Caco-2 (cell line): ENCODE measurements at regions of chr20 and their contacts with region 1.

Region 1: DNA sequence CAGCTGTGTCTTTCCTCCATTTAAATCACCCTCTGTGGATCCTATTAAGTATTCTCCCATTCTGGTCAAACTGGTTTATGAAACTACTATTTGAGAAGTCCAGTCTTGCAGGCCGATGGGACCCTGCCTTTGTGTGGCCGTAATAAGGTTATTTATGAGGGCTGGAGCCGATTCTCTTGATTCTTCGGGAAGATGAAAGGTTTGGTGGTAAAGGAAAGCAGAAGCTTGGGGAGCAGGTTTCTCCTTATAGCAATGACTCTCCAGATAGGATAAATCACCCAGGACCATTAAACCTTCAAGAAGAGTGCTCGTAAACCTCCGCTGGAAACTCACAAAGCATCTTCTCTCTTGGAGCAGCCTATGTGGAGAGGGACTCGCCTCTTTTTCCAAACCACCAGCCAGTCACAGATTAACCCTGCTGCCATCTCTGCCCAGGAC is 69.6 kb upstream of the SALL4 start:
- DNase-seq: peak; percentile 94 to 96
- H3K4me3 ChIP-seq: no peak overlapping the region
- H3K4me3 Mint-ChIP-seq: peak overlapping the region; percentile 62
- H3K27ac Mint-ChIP-seq: peak overlapping the region; percentile 82
- H3K4me1 ChIP-seq: peaks cover 21% of the 10 kb centered on the region
- H3K4me1 Mint-ChIP-seq: peaks cover 35% of the 10 kb centered on the region
- H3K27me3 ChIP-seq: no peaks in the 10 kb centered on the region
- H3K27me3 Mint-ChIP-seq: no peaks in the 10 kb centered on the region
- CTCF ChIP-seq: no peak

Region 2: DNA sequence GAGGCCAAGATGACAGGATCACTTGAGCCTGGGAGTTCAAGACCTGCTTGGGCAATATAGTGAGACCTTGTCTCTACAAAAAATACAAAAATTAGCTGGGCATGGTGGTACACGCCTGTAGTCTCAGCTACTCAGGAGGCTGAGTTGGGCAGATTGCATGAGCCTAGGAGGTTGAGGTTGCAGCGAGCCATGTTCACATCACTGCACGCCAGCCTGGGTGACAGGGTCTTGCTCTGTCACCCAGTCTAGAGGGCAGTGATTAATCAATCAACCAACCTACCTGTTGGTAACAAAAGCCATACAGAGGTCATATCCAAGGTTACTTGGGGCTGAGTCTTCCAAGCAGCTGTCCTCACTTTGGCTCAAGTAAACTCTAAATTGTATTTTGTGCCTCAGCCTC is 95.6 kb before region 1 on chr20:
- CTCF ChIA-PET with region 1: no interaction called
- POLR2A ChIA-PET with region 1: no interaction called
- intact Hi-C with region 1: no loop called
- DNase-seq: no peak
- H3K4me3 ChIP-seq: no peak overlapping the region
- H3K4me3 Mint-ChIP-seq: no peak overlapping the region
- H3K27ac Mint-ChIP-seq: no peak overlapping the region
- H3K4me1 ChIP-seq: no peaks in the 10 kb centered on the region; the same call in 1 of the 2 replicates
- H3K4me1 Mint-ChIP-seq: peaks cover 18% of the 10 kb centered on the region
- H3K27me3 ChIP-seq: no peaks in the 10 kb centered on the region
- H3K27me3 Mint-ChIP-seq: no peaks in the 10 kb centered on the region
- CTCF ChIP-seq: no peak

Region 3: GRCh38 chr20:51811042-51811355 is 60.9 kb before region 1 on chr20:
- CTCF ChIA-PET with region 1: no interaction called
- POLR2A ChIA-PET with region 1: no interaction called
- intact Hi-C with region 1: loop called (anchors 2 kb)
- DNase-seq: peak; percentile 45 to 56
- H3K4me3 ChIP-seq: no peak overlapping the region
- H3K4me3 Mint-ChIP-seq: no peak overlapping the region
- H3K27ac Mint-ChIP-seq: peak overlapping the region; percentile 32
- H3K4me1 ChIP-seq: peaks cover 36% of the 10 kb centered on the region
- H3K4me1 Mint-ChIP-seq: peaks cover 35% of the 10 kb centered on the region
- H3K27me3 ChIP-seq: no peaks in the 10 kb centered on the region
- H3K27me3 Mint-ChIP-seq: no peaks in the 10 kb centered on the region
- CTCF ChIP-seq: no peak

Region 4: DNA sequence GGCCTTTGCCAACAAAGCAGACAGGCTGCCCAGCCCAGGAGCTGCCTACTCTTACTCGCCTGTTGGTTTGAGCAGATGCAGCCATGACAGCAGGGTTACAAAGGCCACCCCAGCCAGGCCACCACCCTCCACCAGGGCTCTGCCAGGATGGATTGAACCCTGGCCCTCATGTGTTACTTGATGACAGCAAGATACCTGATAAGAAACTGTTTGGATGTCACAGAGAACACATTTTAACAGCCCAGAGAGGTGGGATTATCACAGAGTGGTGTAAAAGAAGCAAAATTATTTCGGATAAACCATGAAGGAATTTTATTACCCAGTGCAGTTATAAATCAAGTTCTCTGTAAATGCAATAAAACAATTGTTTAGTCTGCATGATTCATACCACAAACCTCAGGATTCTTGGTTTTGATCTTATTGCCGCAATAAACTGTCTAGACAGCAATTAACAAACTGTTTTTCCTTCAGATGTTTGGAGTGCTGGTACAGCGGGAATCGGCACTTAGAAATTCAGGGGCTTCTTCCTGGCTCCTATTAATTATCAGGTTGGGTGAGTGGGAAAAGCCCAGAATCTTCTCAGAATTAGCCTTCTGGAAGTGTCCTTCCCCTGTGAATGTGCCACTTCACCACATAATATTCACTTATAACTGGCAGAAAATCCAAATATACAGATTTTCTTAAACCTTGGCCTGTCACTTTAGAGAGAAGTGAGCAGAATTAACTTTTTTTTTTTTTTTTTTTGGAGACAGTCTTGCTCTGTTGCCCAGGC is 11.6 kb before region 1 on chr20:
- CTCF ChIA-PET with region 1: interaction called, 4 read pairs
- POLR2A ChIA-PET with region 1: no interaction called
- intact Hi-C with region 1: loop called (anchors 1 kb)
- DNase-seq: peak; percentile 64 to 79
- H3K4me3 ChIP-seq: no peak overlapping the region
- H3K4me3 Mint-ChIP-seq: no peak overlapping the region
- H3K27ac Mint-ChIP-seq: peak overlapping the region; percentile 34
- H3K4me1 ChIP-seq: peaks cover 19% of the 10 kb centered on the region
- H3K4me1 Mint-ChIP-seq: peaks cover 26% of the 10 kb centered on the region
- H3K27me3 ChIP-seq: no peaks in the 10 kb centered on the region
- H3K27me3 Mint-ChIP-seq: no peaks in the 10 kb centered on the region
- CTCF ChIP-seq: no peak

Region 5: GRCh38 chr20:51910321-51911053 is 38.6 kb after region 1 on chr20:
- CTCF ChIA-PET with region 1: no interaction called
- POLR2A ChIA-PET with region 1: no interaction called
- intact Hi-C with region 1: loop called (anchors 2 kb)
- DNase-seq: peak; percentile 78 to 80
- H3K4me3 ChIP-seq: 0 out of 2 replicates have a peak overlapping the region, but pooled peaks have one; percentile 6
- H3K4me3 Mint-ChIP-seq: peak overlapping the region; percentile 68
- H3K27ac Mint-ChIP-seq: peak overlapping the region; percentile 82
- H3K4me1 ChIP-seq: peaks cover 39% of the 10 kb centered on the region
- H3K4me1 Mint-ChIP-seq: peaks cover 47% of the 10 kb centered on the region
- H3K27me3 ChIP-seq: no peaks in the 10 kb centered on the region
- H3K27me3 Mint-ChIP-seq: no peaks in the 10 kb centered on the region
- CTCF ChIP-seq: no peak

Region 6: DNA sequence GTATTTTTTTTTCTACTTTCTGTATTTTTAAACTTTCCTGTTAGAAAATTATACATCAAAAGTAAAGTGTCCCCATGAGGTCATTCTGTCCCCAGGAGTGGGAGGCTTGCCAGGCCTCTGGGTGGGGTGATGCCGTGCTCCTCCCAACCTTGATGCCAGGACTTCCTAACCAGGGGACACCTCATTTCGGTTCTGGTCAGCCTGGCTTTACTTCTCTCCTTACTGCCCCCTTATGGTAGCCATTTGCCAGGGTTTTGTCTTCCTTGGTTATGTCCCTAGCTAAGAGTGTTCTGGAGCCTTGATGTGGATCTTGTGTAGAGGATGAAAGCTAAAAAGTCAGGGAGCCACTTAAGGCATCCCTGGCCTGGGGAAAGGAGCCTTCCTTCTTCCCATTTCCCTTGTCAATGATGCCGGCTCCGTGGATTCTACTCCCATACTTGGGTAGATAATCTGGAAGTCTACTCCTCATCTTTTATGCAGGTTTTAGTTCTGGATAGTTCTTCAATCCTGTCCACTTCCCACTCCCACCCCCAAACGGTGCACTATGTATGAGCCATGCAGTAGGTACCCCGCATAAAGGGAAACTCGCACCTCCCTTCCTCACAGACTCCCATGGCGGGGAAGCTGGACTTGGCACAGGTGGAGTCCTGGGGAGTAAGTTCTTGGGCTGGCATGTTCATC is 94.5 kb after region 1 on chr20:
- CTCF ChIA-PET with region 1: interaction called, 3 read pairs
- POLR2A ChIA-PET with region 1: no interaction called
- intact Hi-C with region 1: loop called (anchors 5 kb)
- DNase-seq: peak; percentile 87
- H3K4me3 ChIP-seq: no peak overlapping the region
- H3K4me3 Mint-ChIP-seq: no peak overlapping the region
- H3K27ac Mint-ChIP-seq: no peak overlapping the region
- H3K4me1 ChIP-seq: peaks cover 6% of the 10 kb centered on the region; the same call in 1 of the 2 replicates
- H3K4me1 Mint-ChIP-seq: peaks cover 11% of the 10 kb centered on the region
- H3K27me3 ChIP-seq: no peaks in the 10 kb centered on the region
- H3K27me3 Mint-ChIP-seq: no peaks in the 10 kb centered on the region
- CTCF ChIP-seq: peak; percentile 86 to 88

Region 7: DNA sequence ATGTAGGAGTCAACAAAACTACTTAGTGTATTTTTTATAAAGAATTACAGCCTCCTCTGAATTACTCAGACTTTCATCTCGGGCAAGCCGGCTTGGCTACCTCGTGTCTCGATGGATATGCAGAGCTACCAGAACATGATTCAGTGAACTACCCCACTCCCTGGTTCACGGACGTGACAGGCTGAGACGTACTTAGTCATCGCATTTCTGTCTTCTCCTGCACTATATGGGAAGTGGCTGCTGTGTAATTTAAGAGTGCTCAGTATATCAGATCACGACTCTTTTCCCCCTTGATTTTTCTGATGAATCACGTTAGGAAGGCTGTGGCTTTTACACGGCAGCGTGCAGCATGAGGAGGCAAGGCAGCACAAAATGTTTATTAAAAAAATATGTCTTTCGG is 622.4 kb after region 1 on chr20:
- CTCF ChIA-PET with region 1: no interaction called
- POLR2A ChIA-PET with region 1: no interaction called
- intact Hi-C with region 1: no loop called
- DNase-seq: no peak
- H3K4me3 ChIP-seq: no peak overlapping the region
- H3K4me3 Mint-ChIP-seq: no peak overlapping the region
- H3K27ac Mint-ChIP-seq: no peak overlapping the region
- H3K4me1 ChIP-seq: no peaks in the 10 kb centered on the region
- H3K4me1 Mint-ChIP-seq: no peaks in the 10 kb centered on the region
- H3K27me3 ChIP-seq: no peaks in the 10 kb centered on the region
- H3K27me3 Mint-ChIP-seq: peaks cover 12% of the 10 kb centered on the region
- CTCF ChIP-seq: no peak